ENCODE measurements at regions of chr17 and their contacts with region 1.

Region 1: DNA sequence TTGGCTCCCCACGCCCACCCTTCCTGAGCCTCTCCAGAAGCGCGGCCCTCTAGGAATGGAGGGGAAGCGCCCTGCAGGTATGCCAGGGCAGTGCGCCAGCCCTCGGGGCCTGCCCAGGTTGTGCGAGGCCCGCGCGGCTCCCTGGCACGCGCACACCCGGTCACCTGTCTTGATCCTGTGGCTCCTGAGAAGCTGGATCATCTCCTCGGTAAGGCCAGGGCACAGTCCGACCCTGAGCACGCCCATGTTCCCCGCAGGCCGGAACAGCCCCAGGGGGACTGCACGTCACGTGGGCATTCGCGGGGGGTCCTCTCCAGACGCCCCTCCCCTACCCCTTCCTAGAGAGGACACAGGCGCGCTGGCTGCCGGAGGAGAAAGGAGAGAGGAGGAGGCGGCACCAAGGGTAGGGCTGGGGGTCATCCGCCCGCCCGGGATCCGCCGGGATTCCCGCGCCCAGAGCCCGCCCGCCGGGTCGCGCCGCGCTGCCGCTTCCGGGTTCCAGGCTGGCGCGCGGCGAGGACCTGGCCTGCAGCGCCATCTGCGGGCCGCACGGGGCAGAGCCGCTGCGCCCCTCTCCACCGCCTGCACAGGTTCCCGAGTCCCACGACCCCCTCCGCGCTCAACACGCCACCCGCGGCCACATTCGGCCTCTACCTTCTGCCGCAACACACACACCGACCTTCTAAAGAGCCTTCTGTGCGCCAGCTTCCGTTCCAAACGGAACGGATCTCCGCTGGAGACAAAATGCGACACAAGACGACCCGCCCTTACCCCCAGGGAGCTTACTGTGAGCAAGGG is at the start of gene RAD51D:
- DNase-seq: peak; percentile 85
- ATAC-seq: peak; percentile 92
- H3K4me3 Mint-ChIP-seq: peak within 1 kb of the TSS; percentile 91
- H3K27ac Mint-ChIP-seq: peak within 1 kb of the TSS; percentile 95
- H3K4me1 Mint-ChIP-seq: peaks cover 29% of the 10 kb centered on the region
- H3K27me3 Mint-ChIP-seq: no peaks in the 10 kb centered on the region
- total RNA-seq, gene RAD51D: 32.1 to 33.6 TPM

Region 2: GRCh38 chr17:34974794-34975785 is 144.5 kb before region 1 on chr17:
- CTCF ChIA-PET with region 1: interaction called, 30 read pairs
- POLR2A ChIA-PET with region 1: interaction called, 4 read pairs
- DNase-seq: no peak
- ATAC-seq: no peak
- H3K4me3 Mint-ChIP-seq: no peak overlapping the region
- H3K27ac Mint-ChIP-seq: no peak overlapping the region
- H3K4me1 Mint-ChIP-seq: peaks cover 23% of the 10 kb centered on the region
- H3K27me3 Mint-ChIP-seq: no peaks in the 10 kb centered on the region

Region 3: GRCh38 chr17:34990921-34991365 is 128.6 kb before region 1 on chr17:
- CTCF ChIA-PET with region 1: interaction called, 118 read pairs
- POLR2A ChIA-PET with region 1: interaction called, 6 read pairs
- DNase-seq: no peak
- ATAC-seq: no peak
- H3K4me3 Mint-ChIP-seq: no peak overlapping the region
- H3K27ac Mint-ChIP-seq: peak overlapping the region; percentile 72
- H3K4me1 Mint-ChIP-seq: peaks cover 36% of the 10 kb centered on the region
- H3K27me3 Mint-ChIP-seq: no peaks in the 10 kb centered on the region

Region 4: GRCh38 chr17:35022536-35023063 is 97.0 kb before region 1 on chr17:
- CTCF ChIA-PET with region 1: interaction called, 11 read pairs
- POLR2A ChIA-PET with region 1: interaction called, 4 read pairs
- DNase-seq: peak; percentile 87
- ATAC-seq: peak; percentile 100
- H3K4me3 Mint-ChIP-seq: peak overlapping the region; percentile 66
- H3K27ac Mint-ChIP-seq: peak overlapping the region; percentile 98
- H3K4me1 Mint-ChIP-seq: peaks cover 40% of the 10 kb centered on the region
- H3K27me3 Mint-ChIP-seq: no peaks in the 10 kb centered on the region

Region 5: GRCh38 chr17:35082073-35082657 is 37.4 kb before region 1 on chr17:
- CTCF ChIA-PET with region 1: interaction called, 10 read pairs
- POLR2A ChIA-PET with region 1: interaction called, 3 read pairs
- DNase-seq: no peak
- ATAC-seq: no peak
- H3K4me3 Mint-ChIP-seq: peak overlapping the region; percentile 53
- H3K27ac Mint-ChIP-seq: peak overlapping the region; percentile 84
- H3K4me1 Mint-ChIP-seq: peaks cover 63% of the 10 kb centered on the region
- H3K27me3 Mint-ChIP-seq: no peaks in the 10 kb centered on the region

Region 6: GRCh38 chr17:35094902-35095301 is 24.7 kb before region 1 on chr17:
- CTCF ChIA-PET with region 1: interaction called, 26 read pairs
- POLR2A ChIA-PET with region 1: interaction called, 4 read pairs
- DNase-seq: no peak
- ATAC-seq: no peak
- H3K4me3 Mint-ChIP-seq: no peak overlapping the region
- H3K27ac Mint-ChIP-seq: no peak overlapping the region
- H3K4me1 Mint-ChIP-seq: peaks cover 15% of the 10 kb centered on the region
- H3K27me3 Mint-ChIP-seq: no peaks in the 10 kb centered on the region

Region 7: GRCh38 chr17:35175638-35176415 is 56.3 kb after region 1 on chr17:
- CTCF ChIA-PET with region 1: no interaction called
- POLR2A ChIA-PET with region 1: no interaction called
- DNase-seq: no peak
- ATAC-seq: no peak
- H3K4me3 Mint-ChIP-seq: no peak overlapping the region
- H3K27ac Mint-ChIP-seq: no peak overlapping the region
- H3K4me1 Mint-ChIP-seq: peaks cover 78% of the 10 kb centered on the region
- H3K27me3 Mint-ChIP-seq: no peaks in the 10 kb centered on the region

Region 8: GRCh38 chr17:35747540-35748017 is 628.0 kb after region 1 on chr17:
- CTCF ChIA-PET with region 1: interaction called, 10 read pairs
- POLR2A ChIA-PET with region 1: no interaction called
- DNase-seq: peak; percentile 87
- ATAC-seq: peak; percentile 87
- H3K4me3 Mint-ChIP-seq: no peak overlapping the region
- H3K27ac Mint-ChIP-seq: no peak overlapping the region
- H3K4me1 Mint-ChIP-seq: peaks cover 9% of the 10 kb centered on the region
- H3K27me3 Mint-ChIP-seq: peaks cover 31% of the 10 kb centered on the region